Head of caudate nucleus (tissue), 42 donors: ENCODE measurements at regions of chr3 and their contacts with region 1.

Region 1: DNA sequence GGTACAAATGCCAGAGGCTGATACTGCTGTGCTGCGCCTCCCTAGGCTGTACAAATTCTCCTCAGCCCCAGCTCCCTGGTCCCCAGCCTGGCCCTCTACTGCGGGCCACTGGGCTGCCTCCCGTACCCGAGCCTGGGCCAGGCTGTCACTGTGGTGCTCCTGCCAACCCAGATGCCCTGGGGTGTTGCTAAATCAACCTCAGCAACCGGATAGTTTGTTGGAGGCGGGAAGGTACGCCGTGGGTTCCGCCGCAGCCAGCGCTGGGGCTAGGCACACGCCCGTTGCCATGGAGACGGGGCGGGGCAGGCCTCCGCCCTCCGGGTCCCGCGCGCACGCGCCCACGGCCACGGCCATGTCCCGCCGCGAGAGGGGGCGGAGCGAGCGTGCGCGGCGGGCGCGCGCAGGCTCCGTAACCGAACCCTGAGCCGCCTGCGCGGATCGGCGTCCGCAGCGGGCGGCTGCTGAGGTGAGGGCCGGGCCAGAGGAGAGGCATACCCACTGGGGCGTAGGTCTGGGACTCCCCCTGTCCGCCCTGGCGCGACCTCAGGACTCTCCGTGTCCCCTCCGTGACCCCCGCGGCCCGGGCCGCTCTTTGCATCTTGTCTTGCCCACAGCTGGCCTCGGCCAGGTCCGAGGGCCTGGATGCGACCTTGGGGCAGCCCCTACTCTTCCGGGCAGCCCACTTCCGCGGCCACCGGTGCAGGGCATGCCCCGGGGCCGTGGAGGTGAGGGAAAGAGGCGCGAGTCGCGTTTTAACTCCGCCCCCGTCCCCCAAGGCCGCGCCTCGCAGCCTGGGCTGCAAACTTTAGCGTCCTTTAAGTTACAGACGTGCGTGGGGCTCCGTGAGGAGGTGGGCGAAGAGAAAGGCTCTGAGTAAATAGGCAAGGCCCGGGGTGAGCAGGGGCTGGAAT is at the start of gene TEX264:
- DNase-seq: peak; percentile 63 to 95 (median 91)

Region 2: DNA sequence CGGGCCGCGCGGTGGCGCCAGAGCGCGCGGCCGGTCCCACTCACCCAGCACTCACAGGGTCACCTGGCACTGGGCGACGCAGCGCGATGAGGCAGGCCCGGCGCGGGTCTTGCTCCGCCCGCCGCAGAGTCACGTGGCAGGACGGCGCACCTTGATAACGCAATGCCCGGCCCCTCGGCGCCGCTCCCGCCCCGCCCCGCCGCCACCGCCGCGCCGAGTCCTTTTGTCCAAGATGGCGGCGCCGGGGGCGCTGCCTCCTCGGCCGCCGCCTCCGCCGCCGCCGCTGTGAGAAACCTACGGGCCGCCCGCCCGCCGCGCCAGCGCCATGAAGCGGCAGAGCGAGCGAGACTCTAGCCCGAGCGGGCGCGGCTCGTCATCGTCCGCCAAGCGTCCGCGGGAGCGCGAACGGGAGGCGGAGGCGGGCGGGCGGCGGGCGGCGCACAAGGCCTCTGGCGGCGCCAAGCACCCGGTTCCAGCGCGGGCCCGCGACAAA is 280.0 kb before region 1 on chr3 and contains the start of gene RBM15B:
- intact Hi-C with region 1: loop called (anchors 10 kb)
- DNase-seq: peak; percentile 93 to 99 (median 98)

Region 3: DNA sequence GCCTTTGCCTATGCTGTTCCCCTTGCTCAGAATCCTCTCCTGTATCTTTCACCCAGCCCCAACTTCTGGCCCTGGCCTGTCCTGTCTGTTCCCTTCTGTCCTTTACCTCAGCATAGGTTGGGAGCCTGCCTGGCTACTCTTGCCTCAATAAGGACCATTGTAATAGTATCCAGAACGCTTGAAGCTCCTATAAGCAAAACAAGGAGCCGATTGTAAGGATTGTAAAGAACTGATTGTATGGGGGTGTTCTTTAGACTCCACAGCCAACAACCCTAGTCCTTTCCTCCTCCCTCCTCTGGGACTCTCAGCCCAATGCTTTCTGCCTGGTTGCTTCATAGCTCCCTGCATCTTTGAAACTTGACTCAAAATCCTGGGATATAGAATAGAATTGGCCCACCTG is 151.2 kb before region 1 on chr3:
- intact Hi-C with region 1: no loop called
- DNase-seq: peak in 1 of 42 donors; percentile 7

Region 4: DNA sequence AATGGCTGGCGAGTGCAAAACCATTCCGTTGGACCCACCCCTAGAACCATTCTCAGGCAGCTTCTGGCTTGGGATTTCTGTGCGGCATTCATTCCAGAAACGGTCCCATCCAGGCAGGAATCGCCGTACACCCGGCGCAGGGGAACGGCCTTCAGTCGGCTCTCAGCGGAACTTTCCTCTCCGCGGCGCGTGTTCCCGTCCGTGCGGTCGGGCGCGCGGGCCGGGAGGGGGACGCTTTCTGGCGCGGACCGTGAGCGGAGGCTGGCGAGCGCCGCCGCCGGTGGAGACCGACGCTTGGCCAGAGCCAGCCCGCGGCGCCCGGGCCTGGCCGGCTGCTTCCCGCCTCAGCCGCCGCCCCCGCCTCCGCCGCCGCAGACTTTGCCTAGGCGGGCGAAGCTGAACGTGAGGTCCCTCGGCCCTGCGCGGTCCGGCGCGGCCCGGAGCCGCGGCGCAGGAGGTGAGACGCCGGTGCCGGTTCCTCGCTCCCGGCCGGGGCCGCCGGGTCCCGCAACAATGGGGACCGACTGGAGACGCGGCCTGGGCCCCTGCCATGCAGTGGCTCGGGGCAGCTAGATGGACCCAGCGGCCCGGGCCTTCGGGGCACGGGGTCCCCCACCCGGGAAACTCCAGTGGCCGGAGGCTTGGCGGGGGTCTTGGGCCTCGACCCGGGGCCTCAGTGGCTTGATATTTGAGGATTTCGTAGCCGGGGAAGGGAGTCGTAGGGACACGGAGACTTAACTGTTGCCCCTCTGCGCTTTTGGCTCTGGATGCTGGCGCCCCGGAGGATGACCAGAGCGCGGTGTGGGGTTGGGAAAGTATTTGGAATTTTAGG is 132.4 kb before region 1 on chr3 and contains the start of gene RAD54L2:
- intact Hi-C with region 1: loop called (anchors 10 kb)
- DNase-seq: peak; percentile 49 to 94 (median 88)

Region 5: GRCh38 chr3:51896607-51897305 is 225.7 kb after region 1 on chr3:
- intact Hi-C with region 1: no loop called
- DNase-seq: no peak